Activated T-helper 1 cell treated with anti-CD3 and anti-CD28 coated beads, Interleukin-12 subunit alpha, Interleukin-12 subunit beta, Interleukin-2, Interleukin-4 antibody, amounts not matched to agents 30 ng/mL and 10 ng/mL and 1 ng/mL, durations not matched to agents 14 hours and 24 hours and 36 hours (primary cell): ENCODE measurements at regions of chr2 and their contacts with region 1.

Region 1: GRCh38 chr2:134290358-134290757 is 36.5 kb downstream of the MGAT5 start:
- DNase-seq: peak; percentile 9
- H3K4me3 Mint-ChIP-seq: no peak overlapping the region
- H3K27ac Mint-ChIP-seq: no peak overlapping the region
- H3K4me1 Mint-ChIP-seq: peaks cover 26% of the 10 kb centered on the region
- H3K27me3 Mint-ChIP-seq: peaks cover 10% of the 10 kb centered on the region

Region 2: DNA sequence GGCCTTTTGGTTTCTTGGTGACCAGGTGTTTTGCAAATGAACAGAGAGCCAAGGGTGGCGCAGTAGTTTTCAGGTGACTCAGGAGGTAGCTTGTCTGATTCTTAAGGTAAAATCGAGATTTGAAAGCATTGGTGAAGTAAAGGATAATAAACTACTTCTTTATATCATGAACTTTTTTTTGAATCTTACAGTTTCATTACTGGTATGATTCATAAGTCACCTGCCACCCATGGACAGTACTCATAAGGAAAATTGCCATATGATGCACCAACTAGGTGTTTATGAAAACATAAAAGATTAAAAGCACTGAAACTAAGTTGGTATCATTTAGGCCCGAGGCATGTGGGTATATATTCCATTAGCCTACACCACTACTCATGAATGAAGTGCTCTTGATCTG is 120.6 kb before region 1 on chr2:
- intact Hi-C with region 1: loop called (anchors 1 kb)
- DNase-seq: no peak
- H3K4me3 Mint-ChIP-seq: no peak overlapping the region
- H3K27ac Mint-ChIP-seq: peak overlapping the region; percentile 47
- H3K4me1 Mint-ChIP-seq: peaks cover 17% of the 10 kb centered on the region
- H3K27me3 Mint-ChIP-seq: no peaks in the 10 kb centered on the region

Region 3: GRCh38 chr2:134218930-134219658 is 71.3 kb before region 1 on chr2:
- intact Hi-C with region 1: loop called (anchors 1 kb)
- DNase-seq: peak; percentile 11
- H3K4me3 Mint-ChIP-seq: no peak overlapping the region
- H3K27ac Mint-ChIP-seq: peak overlapping the region; percentile 75
- H3K4me1 Mint-ChIP-seq: peaks cover 40% of the 10 kb centered on the region
- H3K27me3 Mint-ChIP-seq: peaks cover 9% of the 10 kb centered on the region

Region 4: GRCh38 chr2:134301099-134301927 is 11.0 kb after region 1 on chr2:
- intact Hi-C with region 1: loop called (anchors 1 kb)
- DNase-seq: no peak
- H3K4me3 Mint-ChIP-seq: no peak overlapping the region
- H3K27ac Mint-ChIP-seq: no peak overlapping the region
- H3K4me1 Mint-ChIP-seq: peaks cover 16% of the 10 kb centered on the region
- H3K27me3 Mint-ChIP-seq: peaks cover 3% of the 10 kb centered on the region

Region 5: GRCh38 chr2:134324947-134325346 is 34.6 kb after region 1 on chr2:
- intact Hi-C with region 1: loop called (anchors 1 kb)
- DNase-seq: no peak
- H3K4me3 Mint-ChIP-seq: no peak overlapping the region
- H3K27ac Mint-ChIP-seq: peak overlapping the region; percentile 6
- H3K4me1 Mint-ChIP-seq: peaks cover 66% of the 10 kb centered on the region
- H3K27me3 Mint-ChIP-seq: no peaks in the 10 kb centered on the region

Region 6: GRCh38 chr2:134411828-134412638 is 121.7 kb after region 1 on chr2:
- intact Hi-C with region 1: loop called (anchors 2 kb)
- DNase-seq: peak; percentile 62
- H3K4me3 Mint-ChIP-seq: no peak overlapping the region
- H3K27ac Mint-ChIP-seq: no peak overlapping the region
- H3K4me1 Mint-ChIP-seq: peaks cover 28% of the 10 kb centered on the region
- H3K27me3 Mint-ChIP-seq: no peaks in the 10 kb centered on the region

Region 7: DNA sequence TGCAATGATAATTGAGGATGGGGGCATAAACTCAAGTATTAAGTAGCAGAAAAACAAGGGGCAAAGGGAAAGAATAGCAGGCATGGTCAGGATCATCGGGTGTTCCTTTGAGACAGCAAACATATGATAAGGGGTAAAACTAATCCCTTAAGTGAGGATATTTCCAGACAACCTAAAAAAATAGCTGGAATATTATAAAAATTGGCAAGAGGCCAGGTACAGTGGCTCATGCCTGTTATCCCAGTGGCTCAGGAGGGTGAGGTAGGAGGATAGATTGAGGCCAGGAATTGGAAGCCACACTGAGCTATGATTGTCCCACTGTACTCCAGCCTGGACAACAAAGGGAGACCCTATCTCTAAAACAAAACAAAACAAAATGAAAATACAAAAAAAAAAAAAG is 1101.6 kb after region 1 on chr2:
- intact Hi-C with region 1: no loop called
- DNase-seq: no peak
- H3K4me3 Mint-ChIP-seq: no peak overlapping the region
- H3K27ac Mint-ChIP-seq: no peak overlapping the region
- H3K4me1 Mint-ChIP-seq: no peaks in the 10 kb centered on the region
- H3K27me3 Mint-ChIP-seq: no peaks in the 10 kb centered on the region